B cell (primary cell): ENCODE measurements at regions of chr6 and their contacts with region 1.

Region 1: DNA sequence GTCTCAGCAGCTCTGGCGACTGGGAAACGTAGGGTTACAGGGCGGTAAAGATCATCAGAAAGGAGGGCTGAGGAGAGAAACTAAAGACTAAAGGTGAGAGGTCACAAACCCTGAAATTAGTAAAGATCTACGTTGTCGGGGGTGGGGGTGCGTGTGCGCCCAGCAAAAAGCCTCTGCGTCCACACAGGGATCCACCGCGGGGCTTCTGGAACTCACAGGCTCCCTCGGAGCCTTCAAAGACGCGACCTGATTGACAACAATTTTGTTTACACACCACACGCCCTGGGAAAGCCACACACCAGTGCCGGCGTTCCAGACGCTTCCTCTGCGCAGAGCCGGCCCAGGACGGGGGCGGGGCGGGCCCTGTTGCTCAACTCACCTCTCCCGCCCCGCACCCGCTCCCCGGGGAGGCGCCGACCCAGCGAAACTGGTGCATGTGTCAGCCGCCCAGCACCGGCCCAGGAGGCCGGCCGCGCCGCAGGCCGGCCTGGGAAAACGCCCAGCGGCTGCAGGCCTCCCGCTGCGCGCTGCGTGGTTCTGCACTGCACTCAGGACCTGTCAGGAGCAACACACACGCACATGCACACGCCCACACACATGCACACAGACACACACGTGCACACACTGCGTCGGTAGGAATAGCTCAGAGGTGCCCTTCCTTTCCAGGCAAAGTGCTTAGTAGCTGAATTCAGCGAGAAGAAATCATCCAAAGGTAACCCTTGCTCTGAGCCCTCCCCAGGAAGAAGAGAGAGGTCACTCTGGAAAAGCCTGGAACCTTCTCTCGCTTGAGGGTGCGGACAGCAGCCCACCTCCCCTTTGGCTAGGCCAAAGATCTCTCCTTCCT is 57.2 kb upstream of the ARID1B start:
- DNase-seq: peak; percentile 81
- ATAC-seq: peak; percentile 84
- H3K4me3 ChIP-seq: peak overlapping the region; percentile 47 to 69 (median 55)
- H3K4me3 Mint-ChIP-seq: peak overlapping the region; percentile 92
- H3K27ac ChIP-seq: peak overlapping the region; percentile 83 to 90
- H3K27ac Mint-ChIP-seq: peak overlapping the region; percentile 97
- H3K4me1 ChIP-seq: peaks cover 18 to 32% of the 10 kb centered on the region in 2 donors
- H3K4me1 Mint-ChIP-seq: peaks cover 37% of the 10 kb centered on the region
- H3K27me3 ChIP-seq: no peaks in the 10 kb centered on the region
- H3K27me3 Mint-ChIP-seq: no peaks in the 10 kb centered on the region
- CTCF ChIP-seq: no peak

Region 2: DNA sequence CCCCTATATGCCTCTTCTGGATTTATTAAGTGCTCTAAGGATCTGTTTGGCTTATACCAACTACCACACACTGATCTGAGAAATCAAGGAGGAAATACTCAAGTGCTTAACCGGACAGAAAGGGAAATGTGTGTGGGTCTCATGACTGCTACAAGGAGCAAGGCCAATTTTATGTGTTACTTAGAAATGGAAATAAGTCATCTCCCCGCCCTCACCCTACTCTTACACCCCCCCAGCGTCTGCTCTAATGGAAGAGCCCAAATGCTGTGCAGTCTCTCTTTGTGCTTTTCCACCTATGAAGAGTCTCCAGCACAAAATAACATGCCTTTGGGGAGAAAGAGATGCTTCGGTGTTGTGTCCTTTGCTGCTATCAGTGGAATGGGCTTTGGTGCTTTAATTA is 371.5 kb before region 1 on chr6:
- CTCF ChIA-PET with region 1: no interaction called
- POLR2A ChIA-PET with region 1: no interaction called
- intact Hi-C with region 1: no loop called
- DNase-seq: no peak
- ATAC-seq: no peak
- H3K4me3 ChIP-seq: no peak overlapping the region
- H3K4me3 Mint-ChIP-seq: no peak overlapping the region
- H3K27ac ChIP-seq: no peak overlapping the region
- H3K27ac Mint-ChIP-seq: no peak overlapping the region
- H3K4me1 ChIP-seq: peaks cover 6 to 7% of the 10 kb centered on the region in 2 donors
- H3K4me1 Mint-ChIP-seq: peaks cover 14% of the 10 kb centered on the region
- H3K27me3 ChIP-seq: peaks cover 0 to 3% (median 0%) of the 10 kb centered on the region in 4 experiments
- H3K27me3 Mint-ChIP-seq: peaks cover 25% of the 10 kb centered on the region
- CTCF ChIP-seq: no peak

Region 3: GRCh38 chr6:156698239-156699016 is 21.5 kb before region 1 on chr6:
- CTCF ChIA-PET with region 1: interaction called, 4 read pairs
- POLR2A ChIA-PET with region 1: interaction called, 8 read pairs
- intact Hi-C with region 1: loop called (anchors 1 kb)
- DNase-seq: peak; percentile 86
- ATAC-seq: peak; percentile 84
- H3K4me3 ChIP-seq: peak overlapping the region in 1 of 5 experiments; percentile 18
- H3K4me3 Mint-ChIP-seq: peak overlapping the region; percentile 51
- H3K27ac ChIP-seq: peak overlapping the region; percentile 67 to 89
- H3K27ac Mint-ChIP-seq: peak overlapping the region; percentile 88
- H3K4me1 ChIP-seq: peaks cover 68 to 73% of the 10 kb centered on the region in 2 donors
- H3K4me1 Mint-ChIP-seq: peaks cover 64% of the 10 kb centered on the region
- H3K27me3 ChIP-seq: no peaks in the 10 kb centered on the region
- H3K27me3 Mint-ChIP-seq: no peaks in the 10 kb centered on the region
- CTCF ChIP-seq: no peak

Region 4: DNA sequence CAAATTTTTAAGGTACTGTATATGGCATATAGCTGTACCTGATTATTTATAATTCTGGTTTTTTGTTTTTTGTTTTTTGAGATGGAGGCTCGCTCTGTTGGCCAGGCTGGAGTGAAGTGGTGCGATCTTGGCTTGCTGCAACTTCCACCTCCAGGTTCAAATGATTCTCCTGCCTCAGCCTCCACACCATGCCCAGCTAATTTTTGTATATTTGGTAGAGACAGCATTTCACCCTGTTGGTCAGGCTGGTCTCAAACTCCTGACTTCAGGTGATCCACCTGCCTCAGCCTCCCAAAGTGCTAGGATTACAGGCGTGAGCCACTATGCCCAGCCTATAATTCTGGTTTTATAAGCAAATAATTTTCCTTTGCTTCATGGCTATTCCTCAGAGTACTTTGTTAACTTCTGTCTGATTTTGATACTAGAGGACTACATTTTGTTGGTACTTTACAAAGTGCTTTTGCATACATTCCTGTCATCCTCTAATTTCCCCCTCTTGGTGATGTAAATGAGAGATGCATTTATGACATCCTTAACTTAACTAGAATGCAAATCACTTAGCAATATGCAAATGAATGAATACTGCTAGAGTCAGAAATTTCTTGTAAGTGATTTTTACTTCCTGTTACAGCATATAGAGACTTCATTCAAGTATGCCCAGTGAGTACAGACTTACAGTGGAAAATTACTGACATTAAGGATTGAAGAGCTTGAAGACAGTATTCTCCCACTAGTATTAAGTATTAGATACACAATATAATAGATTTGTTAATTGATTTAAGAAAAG is 21.5 kb after region 1 on chr6:
- CTCF ChIA-PET with region 1: no interaction called
- POLR2A ChIA-PET with region 1: no interaction called
- intact Hi-C with region 1: no loop called
- DNase-seq: peak; percentile 43
- ATAC-seq: peak; percentile 33
- H3K4me3 ChIP-seq: no peak overlapping the region
- H3K4me3 Mint-ChIP-seq: no peak overlapping the region
- H3K27ac ChIP-seq: no peak overlapping the region
- H3K27ac Mint-ChIP-seq: no peak overlapping the region
- H3K4me1 ChIP-seq: peaks cover 8 to 9% of the 10 kb centered on the region in 2 donors
- H3K4me1 Mint-ChIP-seq: peaks cover 7% of the 10 kb centered on the region
- H3K27me3 ChIP-seq: no peaks in the 10 kb centered on the region
- H3K27me3 Mint-ChIP-seq: no peaks in the 10 kb centered on the region
- CTCF ChIP-seq: no peak

Region 5: DNA sequence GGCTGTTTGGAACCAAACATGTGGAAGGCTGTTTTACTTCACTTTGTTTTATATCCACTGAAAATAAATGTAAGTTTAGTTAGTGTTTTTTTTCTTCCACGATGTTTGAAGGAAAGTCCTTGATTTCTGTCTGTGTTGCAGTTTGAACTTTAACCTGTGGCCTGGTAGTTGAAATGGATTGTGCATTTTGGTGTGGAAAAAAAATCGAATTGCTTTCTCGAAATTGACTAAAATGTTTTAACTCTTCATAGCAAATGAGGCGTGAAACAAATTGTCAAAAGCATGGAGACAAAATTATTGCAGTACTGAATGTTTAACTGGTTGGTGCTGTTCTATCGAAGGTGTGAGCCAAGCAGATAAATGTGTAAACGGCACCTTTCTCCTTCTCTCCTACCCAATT is 81.8 kb after region 1 on chr6:
- CTCF ChIA-PET with region 1: no interaction called
- POLR2A ChIA-PET with region 1: interaction called, 10 read pairs
- intact Hi-C with region 1: no loop called
- DNase-seq: no peak
- ATAC-seq: no peak
- H3K4me3 ChIP-seq: no peak overlapping the region
- H3K4me3 Mint-ChIP-seq: no peak overlapping the region
- H3K27ac ChIP-seq: no peak overlapping the region
- H3K27ac Mint-ChIP-seq: no peak overlapping the region
- H3K4me1 ChIP-seq: peaks cover 12 to 34% of the 10 kb centered on the region in 2 donors
- H3K4me1 Mint-ChIP-seq: peaks cover 72% of the 10 kb centered on the region
- H3K27me3 ChIP-seq: no peaks in the 10 kb centered on the region
- H3K27me3 Mint-ChIP-seq: no peaks in the 10 kb centered on the region
- CTCF ChIP-seq: no peak

Region 6: GRCh38 chr6:156816505-156816904 is 96.6 kb after region 1 on chr6:
- CTCF ChIA-PET with region 1: no interaction called
- POLR2A ChIA-PET with region 1: no interaction called
- intact Hi-C with region 1: no loop called
- DNase-seq: peak; percentile 38
- ATAC-seq: peak; percentile 49
- H3K4me3 ChIP-seq: no peak overlapping the region
- H3K4me3 Mint-ChIP-seq: peak overlapping the region; percentile 30
- H3K27ac ChIP-seq: no peak overlapping the region
- H3K27ac Mint-ChIP-seq: peak overlapping the region; percentile 35
- H3K4me1 ChIP-seq: peaks cover 54 to 73% of the 10 kb centered on the region in 2 donors
- H3K4me1 Mint-ChIP-seq: peaks cover 79% of the 10 kb centered on the region
- H3K27me3 ChIP-seq: no peaks in the 10 kb centered on the region
- H3K27me3 Mint-ChIP-seq: no peaks in the 10 kb centered on the region
- CTCF ChIP-seq: no peak

Region 7: GRCh38 chr6:157169656-157170055 is 449.7 kb after region 1 on chr6:
- CTCF ChIA-PET with region 1: no interaction called
- POLR2A ChIA-PET with region 1: no interaction called
- intact Hi-C with region 1: no loop called
- DNase-seq: no peak
- ATAC-seq: no peak
- H3K4me3 ChIP-seq: no peak overlapping the region
- H3K4me3 Mint-ChIP-seq: no peak overlapping the region
- H3K27ac ChIP-seq: no peak overlapping the region
- H3K27ac Mint-ChIP-seq: no peak overlapping the region
- H3K4me1 ChIP-seq: no peaks in the 10 kb centered on the region
- H3K4me1 Mint-ChIP-seq: no peaks in the 10 kb centered on the region
- H3K27me3 ChIP-seq: no peaks in the 10 kb centered on the region
- H3K27me3 Mint-ChIP-seq: no peaks in the 10 kb centered on the region
- CTCF ChIP-seq: no peak